Posterior cingulate gyrus (tissue), 11 donors: ENCODE measurements at regions of chr3 and their contacts with region 1.

Region 1: DNA sequence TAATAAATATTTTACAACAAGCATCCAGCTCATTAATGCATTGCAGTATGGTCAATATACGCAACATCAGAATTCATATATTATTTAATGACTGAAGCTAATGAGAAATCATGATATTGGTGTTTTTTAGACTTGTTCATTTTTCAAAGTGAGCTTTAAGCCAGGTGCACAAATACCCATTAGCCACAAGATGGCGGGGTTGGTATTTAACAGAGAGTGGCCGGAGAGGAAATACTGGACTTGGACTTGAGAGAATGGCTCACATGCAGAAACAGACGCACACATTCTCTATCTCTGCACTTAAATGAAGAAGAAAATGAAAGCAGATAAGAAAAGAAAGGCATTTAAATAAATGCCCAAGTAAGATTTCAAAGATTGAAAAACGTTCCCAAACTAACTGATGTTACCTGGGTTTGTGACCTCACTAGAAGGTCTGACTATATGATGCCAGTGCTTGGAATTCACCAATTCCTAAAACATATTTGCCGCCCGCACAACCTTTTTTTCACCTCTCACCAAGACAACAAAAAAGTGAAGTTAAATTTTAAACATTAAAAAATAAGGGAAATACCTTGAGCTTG is 21.2 kb upstream of the CRBN start:
- DNase-seq: peak in 7 of 10 donors; percentile 14 to 91 (median 48)

Region 2: GRCh38 chr3:3998140-3998922 is 797.6 kb after region 1 on chr3:
- intact Hi-C with region 1: loop called (anchors 5 kb)
- DNase-seq: no peak

Region 3: DNA sequence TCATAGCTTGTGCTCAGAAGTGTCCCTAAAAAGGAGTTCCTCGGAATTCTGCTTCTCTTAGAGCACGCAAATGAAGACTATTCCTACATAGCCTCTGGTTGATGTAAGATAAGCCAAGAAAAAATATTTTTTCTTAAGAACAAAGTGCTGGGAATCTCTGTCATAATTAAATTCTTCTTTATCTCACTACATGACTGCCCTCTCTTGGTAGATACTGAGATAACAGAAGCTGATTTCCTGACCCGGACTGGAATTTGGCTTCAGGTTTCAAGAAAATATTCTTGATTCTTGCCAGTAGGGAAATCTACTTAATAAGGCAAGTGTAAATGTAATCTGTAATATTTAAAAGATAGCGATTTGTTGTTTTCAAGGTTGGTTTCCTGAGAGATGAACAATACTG is 1071.1 kb after region 1 on chr3:
- intact Hi-C with region 1: loop called (anchors 2 kb)
- DNase-seq: no peak

Region 4: GRCh38 chr3:4290272-4290893 is 1089.7 kb after region 1 on chr3:
- intact Hi-C with region 1: loop called (anchors 2 kb)
- DNase-seq: peak in 3 of 10 donors; percentile 26 to 59 (median 32)

Region 5: GRCh38 chr3:4633078-4634004 is 1432.6 kb after region 1 on chr3:
- intact Hi-C with region 1: loop called (anchors 10 kb)
- DNase-seq: peak in 1 of 10 donors; percentile 80